ENCODE measurements at regions of chr6 and their contacts with region 1.

Region 1: GRCh38 chr6:63527658-63528514 is 44.4 kb upstream of the LOC128125822 start:
- DNase-seq: peak; percentile 99
- ATAC-seq: peak; percentile 92
- H3K4me3 ChIP-seq: peak overlapping the region in 1 of 3 experiments; percentile 8; a peak in 1 of 6 replicates
- H3K27ac ChIP-seq: peak overlapping the region; percentile 82
- H3K4me1 ChIP-seq: peaks cover 80% of the 10 kb centered on the region
- H3K27me3 ChIP-seq: no peaks in the 10 kb centered on the region
- CTCF ChIP-seq: no peak
- EP300 ChIP-seq: peak; percentile 79 to 96; a peak in 3 of 4 replicates
- POLR2A ChIP-seq: peak in 1 of 2 experiments; percentile 34; a peak in 1 of 4 replicates
- RAD21 ChIP-seq: 0 out of 2 replicates have a peak, but pooled peaks have one; percentile 14

Region 2: DNA sequence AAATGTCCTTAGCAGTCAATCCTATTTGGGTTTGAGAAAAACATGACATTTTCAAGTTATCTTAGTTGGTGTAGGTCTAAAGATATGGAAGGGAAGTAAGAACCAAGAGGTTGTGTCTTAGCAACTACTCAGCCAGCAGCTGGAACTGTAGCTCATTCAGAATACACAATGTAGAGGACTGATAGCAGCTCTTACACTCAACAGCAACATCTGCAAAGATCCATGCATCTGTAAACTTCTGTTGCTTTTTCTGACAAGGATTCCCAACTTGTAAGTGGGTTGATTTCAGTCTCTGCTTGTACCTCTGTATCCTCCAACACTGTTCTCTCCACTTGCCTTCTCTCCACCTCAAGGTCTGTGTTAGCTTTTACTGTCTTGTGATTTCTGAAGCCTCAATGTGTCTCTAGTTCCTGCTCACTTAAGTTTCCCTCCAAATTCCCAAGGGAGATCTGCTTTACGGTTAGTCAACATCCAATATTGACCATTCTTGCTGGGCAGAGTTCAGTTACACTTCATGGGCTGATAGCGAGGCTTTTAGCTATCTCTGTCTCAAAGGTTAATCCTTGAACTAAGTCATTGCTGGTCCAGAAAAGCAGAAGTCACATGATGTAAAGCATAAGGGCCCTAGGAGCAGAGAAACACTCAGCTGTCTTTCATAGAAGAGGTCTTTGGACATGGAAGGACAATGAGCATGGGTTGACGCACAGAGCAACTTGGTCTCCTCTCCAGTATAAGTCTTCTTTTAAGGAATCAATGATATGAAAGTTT is 136.5 kb before region 1 on chr6:
- CTCF ChIA-PET with region 1: no interaction called
- POLR2A ChIA-PET with region 1: interaction called, 10 read pairs
- in situ Hi-C with region 1: no loop called
- intact Hi-C with region 1: no loop called
- DNase-seq: peak; percentile 99
- ATAC-seq: peak; percentile 95
- H3K4me3 ChIP-seq: no peak overlapping the region
- H3K27ac ChIP-seq: peak overlapping the region; percentile 83
- H3K4me1 ChIP-seq: peaks cover 56% of the 10 kb centered on the region
- H3K27me3 ChIP-seq: no peaks in the 10 kb centered on the region
- CTCF ChIP-seq: no peak
- EP300 ChIP-seq: peak; percentile 34 to 99; a peak in 2 of 4 replicates
- POLR2A ChIP-seq: 0 out of 4 replicates have a peak, but pooled peaks of 1 of the 2 experiments have one; percentile 18
- RAD21 ChIP-seq: peak; percentile 63

Region 3: DNA sequence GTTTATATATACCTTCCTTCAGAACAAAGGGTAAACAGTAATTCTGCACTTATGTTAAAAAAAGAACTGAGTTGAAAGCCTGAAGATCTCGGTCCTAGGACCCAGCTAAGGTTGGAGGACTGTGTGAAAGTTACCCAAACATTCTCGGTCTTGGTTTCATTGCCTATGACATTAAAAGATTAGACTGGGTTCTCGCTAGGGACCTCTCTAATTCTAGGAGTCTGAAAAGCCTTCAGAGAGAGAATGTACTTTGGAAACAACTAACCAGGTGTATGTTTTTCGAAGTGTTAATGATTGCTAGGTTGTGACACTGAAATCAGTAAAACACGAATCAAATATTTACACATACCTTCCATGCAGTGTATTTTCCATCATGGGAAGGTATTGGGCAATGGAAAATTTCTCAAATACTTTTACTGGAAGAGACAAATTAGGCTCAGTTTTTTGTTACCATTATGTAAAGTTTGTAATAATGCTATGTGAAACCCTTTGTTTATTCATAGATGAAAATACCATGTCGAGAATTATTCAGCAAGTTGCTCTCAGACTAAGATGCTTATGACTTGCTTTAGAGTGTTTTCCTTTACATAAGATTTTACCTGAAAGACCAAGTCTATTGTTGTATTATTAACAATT is 69.3 kb before region 1 on chr6:
- CTCF ChIA-PET with region 1: no interaction called
- POLR2A ChIA-PET with region 1: interaction called, 14 read pairs
- in situ Hi-C with region 1: no loop called
- intact Hi-C with region 1: no loop called
- DNase-seq: peak; percentile 99
- ATAC-seq: peak; percentile 99
- H3K4me3 ChIP-seq: peak overlapping the region in 2 of 3 experiments; percentile 13 to 14; a peak in 2 of 6 replicates
- H3K27ac ChIP-seq: peak overlapping the region; percentile 96
- H3K4me1 ChIP-seq: peaks cover 89% of the 10 kb centered on the region
- H3K27me3 ChIP-seq: no peaks in the 10 kb centered on the region
- CTCF ChIP-seq: no peak
- EP300 ChIP-seq: peak; percentile 99 to 100
- POLR2A ChIP-seq: peak; percentile 53 to 81; a peak in 3 of 4 replicates
- RAD21 ChIP-seq: no peak

Region 4: GRCh38 chr6:63496361-63496804 is 31.5 kb before region 1 on chr6:
- CTCF ChIA-PET with region 1: no interaction called
- POLR2A ChIA-PET with region 1: interaction called, 10 read pairs
- in situ Hi-C with region 1: no loop called
- intact Hi-C with region 1: no loop called
- DNase-seq: peak; percentile 70
- ATAC-seq: peak; percentile 35
- H3K4me3 ChIP-seq: no peak overlapping the region
- H3K27ac ChIP-seq: peak overlapping the region; percentile 11
- H3K4me1 ChIP-seq: peaks cover 45% of the 10 kb centered on the region
- H3K27me3 ChIP-seq: no peaks in the 10 kb centered on the region
- CTCF ChIP-seq: no peak
- EP300 ChIP-seq: peak in 1 of 2 experiments; percentile 59; a peak in 2 of 4 replicates
- POLR2A ChIP-seq: no peak
- RAD21 ChIP-seq: no peak

Region 5: DNA sequence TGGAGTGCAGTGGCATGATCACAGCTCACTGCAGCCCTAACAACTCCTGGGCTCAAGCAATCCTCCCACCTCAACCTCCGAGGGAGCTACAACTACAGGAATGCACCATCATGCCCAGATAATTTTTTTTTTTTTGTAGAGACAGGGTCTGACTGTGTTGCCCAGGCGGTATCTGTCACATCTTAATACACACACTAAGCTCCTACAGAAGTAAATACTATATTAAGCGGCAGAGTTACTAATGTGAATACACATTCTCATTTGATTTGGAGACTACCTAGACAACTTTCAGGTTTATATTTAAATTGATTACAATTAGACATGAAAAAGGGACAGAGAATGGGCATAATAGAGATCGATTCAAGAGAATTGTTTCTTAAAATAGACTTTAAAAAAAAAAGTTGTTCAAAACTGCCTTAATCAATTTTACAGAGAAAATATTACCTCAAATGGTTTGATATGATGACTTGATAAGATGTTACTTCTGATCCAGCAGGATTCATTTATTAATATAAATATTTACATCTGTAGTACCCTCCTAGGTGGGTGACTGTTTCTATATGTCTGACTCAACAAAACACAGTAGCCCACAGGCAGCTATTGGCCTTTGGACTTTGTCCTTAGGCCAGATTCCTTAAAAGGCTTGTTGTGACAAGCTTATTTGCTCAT is 37.3 kb after region 1 on chr6:
- CTCF ChIA-PET with region 1: no interaction called
- POLR2A ChIA-PET with region 1: interaction called, 29 read pairs
- in situ Hi-C with region 1: no loop called
- intact Hi-C with region 1: no loop called
- DNase-seq: peak; percentile 98
- ATAC-seq: peak; percentile 83
- H3K4me3 ChIP-seq: peak overlapping the region; percentile 24 to 63 (median 42)
- H3K27ac ChIP-seq: peak overlapping the region; percentile 83
- H3K4me1 ChIP-seq: peaks cover 98% of the 10 kb centered on the region
- H3K27me3 ChIP-seq: no peaks in the 10 kb centered on the region
- CTCF ChIP-seq: no peak
- EP300 ChIP-seq: peak; percentile 76 to 95
- POLR2A ChIP-seq: peak in 1 of 2 experiments; percentile 43; a peak in 1 of 4 replicates
- RAD21 ChIP-seq: no peak

Region 6: DNA sequence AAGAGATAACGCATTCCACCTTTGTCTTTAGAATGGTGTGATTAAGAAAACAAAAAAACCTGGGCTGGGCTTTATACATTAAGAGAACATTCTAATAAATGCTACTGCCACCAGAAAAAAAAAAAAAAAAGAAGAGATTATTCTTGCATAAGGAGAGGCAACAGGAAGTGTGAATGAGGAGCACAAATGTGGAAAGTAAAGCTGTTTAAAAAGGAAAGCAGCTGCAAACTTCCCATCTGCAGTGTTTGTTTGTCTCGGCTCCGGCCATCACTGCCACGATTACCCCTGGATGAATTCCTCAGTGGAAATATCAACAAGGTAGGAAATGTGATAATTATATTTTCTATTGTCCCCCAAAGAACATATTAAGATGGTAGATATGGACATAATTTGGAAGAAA is 331.6 kb after region 1 on chr6:
- CTCF ChIA-PET with region 1: no interaction called
- POLR2A ChIA-PET with region 1: no interaction called
- in situ Hi-C with region 1: no loop called
- intact Hi-C with region 1: no loop called
- DNase-seq: no peak
- ATAC-seq: no peak
- H3K4me3 ChIP-seq: no peak overlapping the region
- H3K27ac ChIP-seq: no peak overlapping the region
- H3K4me1 ChIP-seq: no peaks in the 10 kb centered on the region
- H3K27me3 ChIP-seq: no peaks in the 10 kb centered on the region; a peak in 1 of 5 replicates
- CTCF ChIP-seq: no peak
- EP300 ChIP-seq: no peak
- POLR2A ChIP-seq: no peak
- RAD21 ChIP-seq: no peak